ENCODE measurements at regions of chr19 and their contacts with region 1.

Region 1: DNA sequence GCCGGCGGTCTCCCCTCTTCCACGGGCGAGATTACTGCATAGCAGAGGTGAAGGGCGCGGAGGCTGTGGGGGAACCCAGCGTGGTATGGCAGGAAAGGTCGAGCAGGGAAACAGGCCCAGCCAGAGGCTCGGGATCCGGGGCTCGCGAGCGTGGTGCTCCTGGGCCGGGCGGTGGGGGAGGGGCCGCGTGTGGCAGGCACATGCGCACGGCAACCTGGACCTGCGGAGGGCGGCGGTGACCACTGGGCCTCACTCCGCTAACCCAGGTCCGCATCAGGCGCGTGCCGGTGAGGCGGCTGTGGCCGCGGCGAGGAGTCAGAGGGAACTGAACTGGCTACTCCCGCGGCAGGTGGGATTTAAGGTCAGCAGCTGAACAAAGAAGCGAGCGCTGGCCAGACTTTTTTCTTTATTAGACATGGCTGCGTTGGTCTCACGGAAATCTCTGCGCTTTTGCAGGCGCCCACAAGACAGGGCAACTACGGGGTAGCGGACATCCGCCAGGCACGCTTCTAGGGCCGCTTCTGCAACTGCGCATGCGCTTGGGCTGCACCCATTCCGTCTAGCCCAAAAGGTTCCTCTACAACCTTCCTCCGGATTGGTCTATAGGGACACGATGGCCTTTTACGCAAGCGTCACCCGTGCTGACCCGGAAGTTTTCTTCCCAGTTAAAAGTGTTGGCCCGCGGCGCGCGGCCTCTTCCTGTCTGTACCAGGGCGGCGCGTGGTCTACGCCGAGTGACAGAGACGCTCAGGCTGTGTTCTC is at the start of gene RPS5:
- DNase-seq: peak; percentile 96 to 97
- ATAC-seq: peak; percentile 99
- H3K4me3 ChIP-seq: peak within 1 kb of the TSS; percentile 75 to 89 (median 78)
- H3K27ac ChIP-seq: peak within 1 kb of the TSS; percentile 95 to 100 (median 99)
- H3K4me1 ChIP-seq: peaks cover 33 to 35% of the 10 kb centered on the region in 2 donors
- H3K27me3 ChIP-seq: no peaks in the 10 kb centered on the region
- CTCF ChIP-seq: no peak
- POLR2A ChIP-seq: peak; percentile 85 to 88
- total RNA-seq, gene RPS5: 1,345 to 1,665 (median 1,438) TPM

Region 2: DNA sequence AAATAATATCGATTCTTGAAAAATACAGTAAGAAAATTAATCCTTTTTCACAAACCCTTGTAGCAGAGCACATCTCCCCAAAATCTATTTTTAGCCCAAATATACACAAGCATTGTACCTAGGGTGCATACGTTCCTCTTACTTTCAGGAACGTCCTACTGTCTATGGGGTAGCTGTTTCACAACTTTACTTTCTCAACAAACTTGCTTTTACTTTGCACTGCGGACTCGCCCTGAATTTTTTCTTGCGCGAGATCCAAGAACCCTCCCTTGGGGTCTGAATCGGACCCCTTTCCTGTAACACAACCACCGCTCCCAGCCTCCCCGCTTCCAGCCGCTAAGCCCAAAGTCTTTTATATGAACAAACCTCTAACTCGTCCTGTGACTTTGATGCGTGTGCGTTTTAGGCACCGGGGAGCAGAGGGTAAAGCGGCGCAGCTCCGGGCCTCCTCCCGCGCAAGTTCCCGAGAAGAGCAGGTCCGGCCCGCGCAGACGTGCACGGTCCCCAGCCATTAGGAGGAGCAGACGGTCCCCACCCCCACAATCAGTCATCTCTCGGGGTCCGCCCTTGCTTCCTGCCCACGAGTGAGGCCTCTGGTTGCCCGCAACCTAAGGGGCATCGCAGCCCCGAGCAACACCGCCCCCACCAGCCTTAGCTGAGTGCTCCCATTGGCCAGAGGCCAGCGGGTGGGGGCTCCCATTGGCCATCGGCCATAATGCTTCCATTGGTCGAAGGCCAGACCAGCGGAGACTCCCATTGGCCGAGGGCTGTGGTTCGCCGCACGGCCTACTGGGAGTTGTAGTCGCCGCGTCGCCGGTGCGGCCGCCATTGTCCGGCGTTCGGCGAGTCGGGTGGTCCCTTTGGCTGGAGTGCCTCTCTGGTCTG is 108.4 kb before region 1 on chr19 and contains the start of gene ZNF8:
- in situ Hi-C with region 1: no loop called
- intact Hi-C with region 1: no loop called
- DNase-seq: peak; percentile 85 to 89
- ATAC-seq: peak; percentile 94 to 95
- H3K4me3 ChIP-seq: peak within 1 kb of the TSS; percentile 74 to 82 (median 78)
- H3K27ac ChIP-seq: peak within 1 kb of the TSS; percentile 72 to 91 (median 83)
- H3K4me1 ChIP-seq: peaks cover 4 to 15% of the 10 kb centered on the region in 2 donors
- H3K27me3 ChIP-seq: peaks cover 0 to 10% (median 7%) of the 10 kb centered on the region in 3 donors
- CTCF ChIP-seq: no peak
- POLR2A ChIP-seq: peak; percentile 20 to 39
- total RNA-seq, gene ZNF8: 0.78 to 2.1 (median 1.2) TPM

Region 3: GRCh38 chr19:58338825-58339558 is 47.8 kb before region 1 on chr19:
- in situ Hi-C with region 1: no loop called
- intact Hi-C with region 1: no loop called
- DNase-seq: no peak
- ATAC-seq: no peak
- H3K4me3 ChIP-seq: no peak overlapping the region
- H3K27ac ChIP-seq: no peak overlapping the region
- H3K4me1 ChIP-seq: no peaks in the 10 kb centered on the region
- H3K27me3 ChIP-seq: no peaks in the 10 kb centered on the region
- CTCF ChIP-seq: no peak
- POLR2A ChIP-seq: no peak

Region 4: DNA sequence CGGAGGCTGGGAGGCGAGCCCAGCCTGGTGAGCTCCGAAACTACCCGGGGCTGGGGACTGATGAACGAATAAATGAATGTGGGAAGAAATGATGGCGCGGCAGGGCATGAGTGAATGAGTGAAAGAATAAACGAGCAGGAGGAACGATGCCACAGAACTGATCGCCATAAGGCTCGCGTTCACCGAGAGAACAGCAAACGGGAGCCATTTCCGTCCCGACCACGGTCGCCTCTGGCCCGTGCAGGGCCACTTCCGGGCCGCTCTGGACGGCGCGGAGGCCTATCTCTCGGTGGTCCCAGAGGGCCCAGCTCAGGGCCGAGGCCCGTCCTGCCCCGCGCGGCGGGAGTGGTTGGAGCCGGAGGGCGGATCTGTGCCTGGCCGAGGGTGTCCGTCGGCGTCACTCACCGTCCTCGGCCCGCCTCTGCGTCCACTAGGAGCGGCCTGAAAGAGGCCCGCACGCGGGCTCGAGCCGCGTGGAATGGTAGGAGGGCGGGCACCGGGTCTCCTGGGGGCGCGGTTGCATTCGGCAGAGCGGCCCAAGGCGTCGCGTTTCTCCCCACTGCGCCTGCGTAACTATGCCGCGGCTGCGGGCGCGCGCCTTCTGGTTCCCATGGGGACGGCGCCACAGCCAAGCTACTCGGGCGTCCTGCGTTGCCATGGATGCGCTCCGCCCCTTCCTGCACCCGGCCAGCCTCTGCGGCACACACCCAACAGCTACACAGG is 24.3 kb before region 1 on chr19 and contains the start of gene ZNF497:
- in situ Hi-C with region 1: no loop called
- intact Hi-C with region 1: loop called (anchors 1 kb)
- DNase-seq: peak; percentile 92 to 93
- ATAC-seq: peak; percentile 94 to 96
- H3K4me3 ChIP-seq: peak within 1 kb of the TSS; percentile 78 to 95 (median 90)
- H3K27ac ChIP-seq: peak within 1 kb of the TSS; percentile 87 to 92 (median 91)
- H3K4me1 ChIP-seq: peaks cover 0 to 8% of the 10 kb centered on the region in 2 donors
- H3K27me3 ChIP-seq: peaks cover 0 to 2% (median 0%) of the 10 kb centered on the region in 3 donors
- CTCF ChIP-seq: peak in 2 of 5 experiments; percentile 2 to 17
- POLR2A ChIP-seq: peak; percentile 61 to 62
- total RNA-seq, gene ZNF497: 0.07 to 0.87 (median 0.36) TPM in 3 of 4 donors, not detected in the other

Region 5: DNA sequence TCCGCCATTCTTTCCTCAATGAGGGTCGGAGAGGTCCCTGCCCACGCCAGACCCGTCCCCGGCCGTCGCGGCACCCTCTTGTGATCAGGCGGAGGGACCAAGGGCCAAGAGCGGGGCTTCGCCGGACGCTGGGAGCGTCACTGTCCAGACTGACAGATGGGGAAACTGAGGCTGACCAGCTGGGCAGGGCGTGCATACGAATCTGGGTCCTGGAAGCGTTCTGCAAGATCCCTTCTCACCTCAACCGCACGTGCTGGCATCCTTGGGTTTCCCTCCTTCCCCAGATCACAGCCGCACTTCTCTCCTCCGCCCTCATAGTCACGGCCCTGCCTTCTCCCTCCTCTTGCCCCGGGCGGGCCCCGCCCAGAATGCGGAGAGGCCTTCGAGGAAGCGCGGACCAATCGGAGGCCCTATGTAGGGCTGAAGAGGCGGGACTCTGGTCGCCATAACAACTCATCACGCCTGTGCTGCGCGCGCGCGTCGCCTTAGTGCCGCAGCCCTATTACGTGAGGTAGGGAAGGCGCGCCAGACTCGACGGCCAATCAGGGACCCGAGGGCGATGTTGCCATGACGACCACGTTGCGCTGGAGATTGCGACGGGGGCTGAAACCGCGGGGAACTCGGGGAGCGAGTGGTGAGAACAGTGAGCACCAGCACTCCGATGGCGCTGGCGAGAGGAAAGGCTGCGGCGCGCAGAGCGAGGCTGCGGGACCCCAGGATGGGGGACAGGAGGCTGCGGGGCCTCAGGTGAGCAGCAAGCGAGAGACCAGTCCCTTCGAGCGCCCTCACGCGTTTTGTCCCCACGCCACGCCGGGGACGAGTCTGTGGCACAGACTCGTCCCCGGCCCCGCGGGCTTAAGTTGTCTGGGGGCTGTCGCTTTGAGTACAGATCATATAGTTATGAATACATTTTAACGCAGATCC is 14.4 kb after region 1 on chr19:
- in situ Hi-C with region 1: no loop called
- intact Hi-C with region 1: loop called (anchors 1 kb)
- DNase-seq: peak; percentile 97 to 99
- ATAC-seq: peak; percentile 100
- H3K4me3 ChIP-seq: peak overlapping the region; percentile 58 to 62 (median 61)
- H3K27ac ChIP-seq: peak overlapping the region; percentile 38 to 68 (median 54)
- H3K4me1 ChIP-seq: peaks cover 8 to 17% of the 10 kb centered on the region in 2 donors
- H3K27me3 ChIP-seq: peaks cover 12 to 18% (median 14%) of the 10 kb centered on the region in 3 donors
- CTCF ChIP-seq: no peak
- POLR2A ChIP-seq: peak in 1 of 2 donors; percentile 32

Region 6: GRCh38 chr19:58408152-58409009 is 21.6 kb after region 1 on chr19 and contains the start of gene ZNF584:
- in situ Hi-C with region 1: no loop called
- intact Hi-C with region 1: loop called (anchors 1 kb)
- DNase-seq: peak; percentile 92 to 94
- ATAC-seq: peak; percentile 99
- H3K4me3 ChIP-seq: peak within 1 kb of the TSS; percentile 58 to 91 (median 84)
- H3K27ac ChIP-seq: peak within 1 kb of the TSS; percentile 86 to 93 (median 88)
- H3K4me1 ChIP-seq: peaks cover 21 to 23% of the 10 kb centered on the region in 2 donors
- H3K27me3 ChIP-seq: no peaks in the 10 kb centered on the region
- CTCF ChIP-seq: peak in 1 of 5 experiments; percentile 5
- POLR2A ChIP-seq: peak; percentile 83 to 89
- total RNA-seq, gene ZNF584: 8.5 to 21.4 (median 10.2) TPM

Region 7: GRCh38 chr19:58466760-58467589 is 80.2 kb after region 1 on chr19 and contains the start of gene ZNF324:
- in situ Hi-C with region 1: no loop called
- intact Hi-C with region 1: loop called (anchors 5 kb)
- DNase-seq: peak; percentile 97
- ATAC-seq: peak; percentile 99
- H3K4me3 ChIP-seq: peak within 1 kb of the TSS; percentile 87 to 100 (median 99)
- H3K27ac ChIP-seq: peak within 1 kb of the TSS; percentile 68 to 92 (median 88)
- H3K4me1 ChIP-seq: peaks cover 10 to 13% of the 10 kb centered on the region in 2 donors
- H3K27me3 ChIP-seq: no peaks in the 10 kb centered on the region
- CTCF ChIP-seq: no peak
- POLR2A ChIP-seq: peak; percentile 63 to 71
- total RNA-seq, gene ZNF324: 8.1 to 11.4 (median 11.3) TPM